ENCODE measurements at regions of chr12 and their contacts with region 1.

Region 1: GRCh38 chr12:126030573-126030972 is 965.3 kb downstream of the AACS start:
- DNase-seq: no peak
- ATAC-seq: peak; percentile 70
- H3K4me3 ChIP-seq: no peak overlapping the region
- H3K27ac ChIP-seq: no peak overlapping the region
- H3K4me1 ChIP-seq: no peaks in the 10 kb centered on the region
- H3K27me3 ChIP-seq: no peaks in the 10 kb centered on the region
- CTCF ChIP-seq: no peak
- EP300 ChIP-seq: no peak
- POLR2A ChIP-seq: no peak
- RAD21 ChIP-seq: no peak

Region 2: GRCh38 chr12:125978286-125978685 is 52.3 kb before region 1 on chr12:
- CTCF ChIA-PET with region 1: no interaction called
- POLR2A ChIA-PET with region 1: no interaction called
- RAD21 ChIA-PET with region 1: no interaction called
- SMC1A ChIA-PET with region 1: no interaction called
- in situ Hi-C with region 1: no loop called
- intact Hi-C with region 1: no loop called
- DNase-seq: no peak
- ATAC-seq: no peak
- H3K4me3 ChIP-seq: no peak overlapping the region
- H3K27ac ChIP-seq: no peak overlapping the region
- H3K4me1 ChIP-seq: no peaks in the 10 kb centered on the region
- H3K27me3 ChIP-seq: no peaks in the 10 kb centered on the region
- CTCF ChIP-seq: no peak
- EP300 ChIP-seq: no peak
- POLR2A ChIP-seq: no peak
- RAD21 ChIP-seq: no peak

Region 3: GRCh38 chr12:126051611-126052107 is 21.1 kb after region 1 on chr12:
- CTCF ChIA-PET with region 1: interaction called, 3 read pairs
- POLR2A ChIA-PET with region 1: no interaction called
- RAD21 ChIA-PET with region 1: interaction called, 6 read pairs
- SMC1A ChIA-PET with region 1: interaction called, 10 read pairs
- in situ Hi-C with region 1: no loop called
- intact Hi-C with region 1: no loop called
- DNase-seq: no peak
- ATAC-seq: no peak
- H3K4me3 ChIP-seq: no peak overlapping the region
- H3K27ac ChIP-seq: no peak overlapping the region
- H3K4me1 ChIP-seq: no peaks in the 10 kb centered on the region
- H3K27me3 ChIP-seq: no peaks in the 10 kb centered on the region
- CTCF ChIP-seq: no peak
- EP300 ChIP-seq: no peak
- POLR2A ChIP-seq: no peak
- RAD21 ChIP-seq: no peak

Region 4: GRCh38 chr12:127125607-127126259 is 1095.2 kb after region 1 on chr12:
- CTCF ChIA-PET with region 1: no interaction called
- POLR2A ChIA-PET with region 1: no interaction called
- RAD21 ChIA-PET with region 1: no interaction called
- SMC1A ChIA-PET with region 1: no interaction called
- in situ Hi-C with region 1: no loop called
- intact Hi-C with region 1: no loop called
- DNase-seq: peak; percentile 56
- ATAC-seq: peak; percentile 90
- H3K4me3 ChIP-seq: no peak overlapping the region
- H3K27ac ChIP-seq: peak overlapping the region; percentile 63
- H3K4me1 ChIP-seq: peaks cover 3% of the 10 kb centered on the region; the same call in 1 of the 2 replicates
- H3K27me3 ChIP-seq: no peaks in the 10 kb centered on the region
- CTCF ChIP-seq: no peak
- EP300 ChIP-seq: no peak; a peak in 1 of 4 replicates
- POLR2A ChIP-seq: no peak
- RAD21 ChIP-seq: 0 out of 2 replicates have a peak, but pooled peaks have one; percentile 11

Measured in GM12878 (cell line).